CD4-positive, alpha-beta T cell (primary cell): ENCODE measurements at regions of chr16 and their contacts with region 1.

Region 1: DNA sequence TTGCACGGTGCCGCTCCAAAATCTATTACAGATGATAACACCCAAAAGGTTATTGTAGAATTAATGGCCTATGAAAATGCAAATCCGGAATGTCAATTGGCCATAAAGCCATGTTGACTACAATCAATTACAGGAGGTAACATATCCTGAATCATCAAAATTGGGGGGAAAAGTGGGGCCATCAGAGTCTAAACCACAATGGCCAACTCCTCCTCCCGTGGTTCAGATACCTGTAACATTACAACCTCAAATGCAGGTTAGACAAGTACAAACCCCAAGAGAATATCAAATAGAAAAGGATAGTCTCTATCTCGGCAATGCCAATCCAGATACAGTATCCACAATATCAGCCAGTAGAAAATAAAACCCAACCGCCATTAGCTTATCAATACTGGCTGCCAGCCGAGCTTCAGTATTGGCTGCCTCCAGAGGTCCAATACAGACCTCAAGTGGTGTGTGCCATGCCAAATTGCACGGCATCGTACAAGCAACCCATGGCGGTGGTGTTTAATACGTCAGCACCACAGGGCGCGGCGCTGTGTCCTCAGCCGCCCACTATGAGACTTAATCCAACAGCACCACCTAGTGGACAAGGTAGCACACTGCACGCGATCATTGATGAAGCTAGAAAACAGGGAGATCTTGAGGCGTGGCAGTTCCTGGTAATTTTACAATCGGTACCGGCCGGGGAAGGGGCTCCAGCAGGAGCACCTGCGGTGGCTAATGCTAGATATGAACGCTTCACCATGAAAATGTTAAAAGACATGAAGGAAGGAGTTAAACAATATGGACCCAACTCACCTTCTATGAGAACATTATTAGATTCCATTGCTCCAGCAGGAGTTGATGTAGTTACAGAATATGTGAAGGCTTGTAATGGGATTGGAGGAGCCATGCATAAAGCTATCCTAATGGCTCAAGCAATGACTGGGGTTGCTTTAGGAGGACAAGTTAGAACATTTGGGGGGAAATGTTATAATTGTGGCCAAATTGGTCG is 15.2 kb downstream of the FLYWCH1 start:
- DNase-seq: peak; percentile 75 to 95 (median 84)
- ATAC-seq: peak; percentile 100
- H3K4me3 ChIP-seq: no peak overlapping the region
- H3K4me3 Mint-ChIP-seq: no peak overlapping the region
- H3K27ac ChIP-seq: no peak overlapping the region
- H3K27ac Mint-ChIP-seq: peak overlapping the region; percentile 41
- H3K4me1 ChIP-seq: peaks cover 12% of the 10 kb centered on the region
- H3K4me1 Mint-ChIP-seq: peaks cover 13% of the 10 kb centered on the region
- H3K27me3 ChIP-seq: no peaks in the 10 kb centered on the region
- H3K27me3 Mint-ChIP-seq: no peaks in the 10 kb centered on the region
- CTCF ChIP-seq: peak; percentile 95

Region 2: DNA sequence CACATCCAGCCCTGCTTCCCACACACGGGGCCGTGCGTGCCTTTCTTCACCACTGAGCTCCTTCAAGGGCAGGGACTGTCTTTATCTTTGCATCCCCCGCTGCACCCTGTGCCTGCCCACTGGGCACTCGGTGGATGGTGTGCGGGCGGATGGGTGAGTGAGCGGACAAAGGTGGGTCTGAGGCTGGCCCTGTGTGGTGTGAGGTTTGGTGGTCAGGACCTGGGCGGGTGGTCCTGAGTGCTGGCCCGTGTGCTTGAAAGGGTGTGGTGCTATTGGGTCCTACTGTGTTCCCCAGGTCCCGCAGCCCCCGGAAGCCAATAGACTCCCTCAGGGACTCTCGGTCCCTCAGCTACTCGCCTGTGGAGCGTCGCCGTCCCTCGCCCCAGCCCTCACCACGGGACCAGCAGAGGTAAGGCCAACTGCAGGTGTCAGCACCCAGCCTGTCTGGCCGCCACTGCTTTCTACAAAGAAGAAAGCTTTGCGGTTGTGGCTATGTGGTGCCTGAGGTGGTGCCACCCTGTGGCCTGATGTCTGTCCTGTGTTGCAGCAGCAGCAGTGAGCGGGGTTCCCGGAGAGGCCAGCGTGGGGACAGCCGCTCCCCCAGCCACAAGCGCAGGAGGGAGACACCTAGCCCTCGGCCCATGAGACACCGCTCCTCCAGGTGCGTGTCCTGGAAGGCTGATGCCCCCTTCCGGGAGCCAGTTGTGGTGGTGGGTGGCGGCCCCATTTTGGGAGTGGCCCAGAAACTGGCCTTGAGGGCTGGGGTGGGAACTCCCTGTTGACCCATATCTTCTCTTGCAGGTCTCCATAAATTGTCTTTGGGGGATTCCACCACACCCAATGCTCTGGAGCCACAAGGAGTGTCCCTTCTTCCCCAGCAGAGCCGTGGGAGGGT is 156.6 kb before region 1 on chr16:
- CTCF ChIA-PET with region 1: no interaction called
- POLR2A ChIA-PET with region 1: no interaction called
- intact Hi-C with region 1: no loop called
- DNase-seq: peak in 3 of 14 experiments; percentile 24 to 64 (median 41)
- ATAC-seq: peak; percentile 9
- H3K4me3 ChIP-seq: no peak overlapping the region
- H3K4me3 Mint-ChIP-seq: peak overlapping the region; percentile 58
- H3K27ac ChIP-seq: no peak overlapping the region
- H3K27ac Mint-ChIP-seq: peak overlapping the region; percentile 64
- H3K4me1 ChIP-seq: peaks cover 38% of the 10 kb centered on the region
- H3K4me1 Mint-ChIP-seq: peaks cover 26% of the 10 kb centered on the region
- H3K27me3 ChIP-seq: no peaks in the 10 kb centered on the region
- H3K27me3 Mint-ChIP-seq: no peaks in the 10 kb centered on the region
- CTCF ChIP-seq: no peak

Region 3: DNA sequence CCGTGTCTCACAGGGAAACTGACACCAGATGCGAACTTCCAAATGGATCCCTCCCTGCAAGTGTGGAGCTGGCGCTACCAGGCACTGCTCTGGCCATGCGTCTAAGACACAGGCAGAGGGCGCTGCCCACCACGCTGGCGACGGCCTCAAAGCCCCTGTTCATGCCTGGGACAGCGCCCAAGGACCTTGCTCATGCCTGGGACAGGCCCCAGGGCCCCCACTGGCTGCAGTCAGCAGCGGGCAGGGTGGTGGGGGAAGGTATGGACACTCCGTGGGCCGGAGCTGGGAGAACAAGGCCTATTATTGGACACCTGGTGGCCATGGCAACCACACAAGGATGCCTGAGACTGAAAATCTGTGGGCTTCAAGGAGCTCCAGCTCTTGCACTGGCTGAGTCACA is 88.0 kb before region 1 on chr16:
- CTCF ChIA-PET with region 1: interaction called, 6 read pairs
- POLR2A ChIA-PET with region 1: no interaction called
- intact Hi-C with region 1: loop called in 1 of 2 experiments (anchors 1 kb)
- DNase-seq: peak in 12 of 14 experiments; percentile 28 to 81 (median 52)
- ATAC-seq: peak; percentile 72
- H3K4me3 ChIP-seq: no peak overlapping the region
- H3K4me3 Mint-ChIP-seq: no peak overlapping the region
- H3K27ac ChIP-seq: no peak overlapping the region
- H3K27ac Mint-ChIP-seq: peak overlapping the region; percentile 33
- H3K4me1 ChIP-seq: peaks cover 46% of the 10 kb centered on the region
- H3K4me1 Mint-ChIP-seq: peaks cover 32% of the 10 kb centered on the region
- H3K27me3 ChIP-seq: no peaks in the 10 kb centered on the region
- H3K27me3 Mint-ChIP-seq: peaks cover 8% of the 10 kb centered on the region
- CTCF ChIP-seq: peak; percentile 51

Region 4: GRCh38 chr16:2874912-2875362 is 52.0 kb before region 1 on chr16:
- CTCF ChIA-PET with region 1: interaction called, 20 read pairs
- POLR2A ChIA-PET with region 1: no interaction called
- intact Hi-C with region 1: loop called (anchors 2 kb)
- DNase-seq: peak; percentile 40 to 90 (median 56)
- ATAC-seq: peak; percentile 100
- H3K4me3 ChIP-seq: no peak overlapping the region
- H3K4me3 Mint-ChIP-seq: no peak overlapping the region
- H3K27ac ChIP-seq: no peak overlapping the region
- H3K27ac Mint-ChIP-seq: no peak overlapping the region
- H3K4me1 ChIP-seq: peaks cover 9% of the 10 kb centered on the region
- H3K4me1 Mint-ChIP-seq: no peaks in the 10 kb centered on the region
- H3K27me3 ChIP-seq: no peaks in the 10 kb centered on the region
- H3K27me3 Mint-ChIP-seq: no peaks in the 10 kb centered on the region
- CTCF ChIP-seq: peak; percentile 95

Region 5: GRCh38 chr16:2905431-2906387 is 21.2 kb before region 1 on chr16:
- CTCF ChIA-PET with region 1: interaction called, 19 read pairs
- POLR2A ChIA-PET with region 1: no interaction called
- intact Hi-C with region 1: loop called (anchors 1 to 2 kb)
- DNase-seq: peak; percentile 59 to 97 (median 83)
- ATAC-seq: peak; percentile 77
- H3K4me3 ChIP-seq: peak overlapping the region; percentile 94
- H3K4me3 Mint-ChIP-seq: peak overlapping the region; percentile 94
- H3K27ac ChIP-seq: peak overlapping the region in 1 of 2 donors; percentile 10
- H3K27ac Mint-ChIP-seq: no peak overlapping the region
- H3K4me1 ChIP-seq: peaks cover 32% of the 10 kb centered on the region
- H3K4me1 Mint-ChIP-seq: peaks cover 37% of the 10 kb centered on the region
- H3K27me3 ChIP-seq: no peaks in the 10 kb centered on the region
- H3K27me3 Mint-ChIP-seq: no peaks in the 10 kb centered on the region
- CTCF ChIP-seq: no peak

Region 6: GRCh38 chr16:2911580-2912329 is 15.2 kb before region 1 on chr16 and contains the start of gene FLYWCH1:
- CTCF ChIA-PET with region 1: interaction called, 19 read pairs
- POLR2A ChIA-PET with region 1: interaction called, 4 read pairs
- intact Hi-C with region 1: no loop called
- DNase-seq: peak; percentile 97 to 99 (median 98)
- ATAC-seq: peak; percentile 96
- H3K4me3 ChIP-seq: peak within 1 kb of the TSS; percentile 75
- H3K4me3 Mint-ChIP-seq: peak within 1 kb of the TSS; percentile 96
- H3K27ac ChIP-seq: peak within 1 kb of the TSS; percentile 46 to 70
- H3K27ac Mint-ChIP-seq: peak within 1 kb of the TSS; percentile 83
- H3K4me1 ChIP-seq: peaks cover 21% of the 10 kb centered on the region
- H3K4me1 Mint-ChIP-seq: peaks cover 33% of the 10 kb centered on the region
- H3K27me3 ChIP-seq: no peaks in the 10 kb centered on the region
- H3K27me3 Mint-ChIP-seq: no peaks in the 10 kb centered on the region
- CTCF ChIP-seq: no peak
- total RNA-seq, gene FLYWCH1: 84.8 to 97.0 TPM